ENCODE measurements at regions of chr1 and their contacts with region 1.

Region 1: DNA sequence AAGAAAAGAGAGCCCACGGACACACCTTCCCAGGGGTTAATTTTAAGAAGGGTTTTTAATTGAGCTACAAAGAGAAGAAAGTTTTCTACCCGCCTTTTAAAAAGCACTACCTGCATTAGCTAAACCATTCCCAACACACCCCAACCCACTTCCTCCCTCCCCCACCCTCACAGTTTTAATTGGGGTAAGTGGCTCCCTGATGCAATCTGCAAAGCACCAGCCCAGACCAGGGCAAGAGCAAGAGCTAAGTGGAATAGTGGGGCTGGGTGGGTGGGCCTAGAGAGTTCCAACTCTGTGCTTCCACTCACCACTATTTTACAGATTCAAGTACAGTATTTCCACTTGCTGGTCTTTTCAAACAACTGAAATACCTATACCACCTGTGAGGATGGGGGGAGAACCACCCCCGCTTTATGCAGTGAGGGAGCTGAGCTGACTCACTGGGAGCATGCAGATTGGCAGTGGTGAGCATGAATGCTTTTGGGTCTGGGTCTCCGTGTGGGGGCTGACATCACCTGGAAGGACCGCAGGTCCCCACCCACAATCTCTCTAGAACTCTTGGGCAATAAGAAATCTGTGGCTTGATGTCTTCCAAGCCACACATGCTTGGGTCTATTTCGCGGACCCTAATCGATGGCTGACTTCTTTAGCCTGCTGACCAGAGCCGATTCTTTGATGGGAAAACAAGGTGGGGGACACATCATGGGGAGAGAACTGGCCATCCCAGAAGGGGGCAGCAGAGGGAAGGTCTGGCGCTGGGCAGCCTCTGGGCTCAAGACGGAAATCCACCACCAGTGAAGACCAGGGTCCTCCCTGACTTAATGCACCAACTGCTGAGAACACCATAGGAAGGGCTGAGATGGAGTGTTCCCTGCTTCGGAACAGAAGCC is 95.5 kb downstream of the SSBP3 start:
- DNase-seq: peak in 3 of 5 donors; percentile 45 to 64 (median 56)
- ATAC-seq: peak; percentile 10 to 50 (median 36)
- H3K4me3 ChIP-seq: no peak overlapping the region
- H3K27ac ChIP-seq: peak overlapping the region in 5 of 12 donors; percentile 20 to 67 (median 42)
- H3K4me1 ChIP-seq: peaks cover 0 to 87% (median 52%) of the 10 kb centered on the region in 12 donors
- H3K27me3 ChIP-seq: no peaks in the 10 kb centered on the region
- CTCF ChIP-seq: peak; percentile 41 to 72 (median 61)
- POLR2A ChIP-seq: no peak

Region 2: GRCh38 chr1:54121482-54122134 is 189.1 kb before region 1 on chr1:
- intact Hi-C with region 1: loop called in 1 of 10 experiments (anchors 10 kb)
- DNase-seq: peak; percentile 77 to 89 (median 82)
- ATAC-seq: peak; percentile 80 to 94 (median 88)
- H3K4me3 ChIP-seq: peak overlapping the region in 10 of 12 donors; percentile 17 to 44 (median 24)
- H3K27ac ChIP-seq: no peak overlapping the region
- H3K4me1 ChIP-seq: peaks cover 0 to 13% (median 8%) of the 10 kb centered on the region in 12 donors
- H3K27me3 ChIP-seq: peaks cover 0 to 4% (median 0%) of the 10 kb centered on the region in 9 donors
- CTCF ChIP-seq: peak; percentile 62 to 87 (median 77)
- POLR2A ChIP-seq: no peak

Region 3: GRCh38 chr1:54273092-54273794 is 37.4 kb before region 1 on chr1:
- intact Hi-C with region 1: loop called in 1 of 10 experiments (anchors 5 kb)
- DNase-seq: peak in 4 of 5 donors; percentile 56 to 91 (median 68)
- ATAC-seq: peak; percentile 64 to 84 (median 76)
- H3K4me3 ChIP-seq: peak overlapping the region in 2 of 12 donors; percentile 7 to 14
- H3K27ac ChIP-seq: peak overlapping the region; percentile 25 to 94 (median 81)
- H3K4me1 ChIP-seq: peaks cover 11 to 86% (median 66%) of the 10 kb centered on the region in 12 donors
- H3K27me3 ChIP-seq: no peaks in the 10 kb centered on the region
- CTCF ChIP-seq: peak in 7 of 12 donors; percentile 15 to 53 (median 44)
- POLR2A ChIP-seq: no peak

Region 4: DNA sequence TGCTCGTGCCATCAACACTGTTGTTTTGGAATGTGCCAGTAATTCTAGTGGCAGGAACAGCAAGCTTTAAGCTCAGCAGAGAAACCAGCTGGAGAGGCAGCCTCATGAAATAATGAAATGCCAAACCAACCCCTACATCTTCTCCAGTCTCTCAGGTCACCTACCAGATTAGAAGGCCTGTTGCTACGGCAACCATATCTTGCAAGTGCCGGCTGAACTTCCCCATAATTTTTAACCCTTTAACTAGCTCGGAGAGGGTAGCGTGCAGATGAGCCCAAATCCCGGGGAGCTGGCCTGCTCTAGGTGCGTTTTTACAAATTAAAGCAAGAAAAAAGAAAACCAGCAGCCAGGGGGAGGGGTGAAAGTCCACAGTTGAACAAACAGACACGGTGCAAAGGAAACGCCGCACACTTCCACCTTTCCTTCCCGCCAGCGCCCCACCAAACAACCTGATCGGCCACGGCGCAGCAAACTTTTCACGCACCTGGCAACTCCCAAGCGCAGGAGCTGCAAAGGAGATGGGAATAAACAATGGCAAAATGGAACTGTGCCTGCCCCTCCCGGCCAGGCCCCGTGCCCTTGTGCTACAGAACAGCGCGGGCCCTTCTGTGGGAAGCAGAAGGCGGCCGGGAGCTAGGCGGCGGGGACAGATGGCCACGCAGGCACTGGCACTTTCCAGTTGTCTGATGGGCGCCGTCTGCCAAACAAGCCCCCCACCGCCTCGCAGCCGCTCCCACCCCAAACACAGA is 45.4 kb after region 1 on chr1:
- intact Hi-C with region 1: loop called in 3 of 10 experiments (anchors 2 to 5 kb)
- DNase-seq: no peak
- ATAC-seq: no peak
- H3K4me3 ChIP-seq: peak overlapping the region in 4 of 12 donors; percentile 11 to 39 (median 15)
- H3K27ac ChIP-seq: peak overlapping the region in 5 of 12 donors; percentile 2 to 30 (median 13)
- H3K4me1 ChIP-seq: peaks cover 4 to 86% (median 57%) of the 10 kb centered on the region in 12 donors
- H3K27me3 ChIP-seq: no peaks in the 10 kb centered on the region
- CTCF ChIP-seq: no peak
- POLR2A ChIP-seq: no peak

Region 5: DNA sequence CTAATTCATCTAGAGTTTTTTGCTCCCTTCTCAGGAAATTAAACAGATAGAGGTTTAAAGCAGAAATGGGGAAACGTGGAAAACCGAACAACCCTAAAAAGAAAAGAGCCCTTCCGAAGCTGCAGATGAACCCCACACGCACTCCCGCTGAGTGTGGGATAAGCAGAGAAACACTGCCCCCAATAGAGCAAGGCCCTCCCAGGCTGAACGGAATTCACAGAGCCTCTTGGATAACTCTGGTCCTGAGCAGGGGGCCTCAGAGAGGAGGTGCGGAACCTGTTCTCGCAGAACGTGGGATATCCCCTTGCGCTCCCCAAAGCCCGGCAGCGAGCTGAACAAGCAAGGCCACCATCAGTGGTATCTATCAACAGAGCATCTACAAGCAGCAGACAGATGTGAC is 50.7 kb after region 1 on chr1:
- intact Hi-C with region 1: loop called in 3 of 10 experiments (anchors 2 to 5 kb)
- DNase-seq: peak in 1 of 5 donors; percentile 29
- ATAC-seq: no peak
- H3K4me3 ChIP-seq: no peak overlapping the region
- H3K27ac ChIP-seq: peak overlapping the region in 2 of 12 donors; percentile 4 to 27
- H3K4me1 ChIP-seq: peaks cover under 1 to 79% (median 50%) of the 10 kb centered on the region in 12 donors
- H3K27me3 ChIP-seq: no peaks in the 10 kb centered on the region
- CTCF ChIP-seq: peak in 8 of 12 donors; percentile 7 to 46 (median 28)
- POLR2A ChIP-seq: no peak

Region 6: GRCh38 chr1:54367613-54368012 is 56.9 kb after region 1 on chr1:
- intact Hi-C with region 1: loop called in 1 of 10 experiments (anchors 2 kb)
- DNase-seq: no peak
- ATAC-seq: no peak
- H3K4me3 ChIP-seq: no peak overlapping the region
- H3K27ac ChIP-seq: no peak overlapping the region
- H3K4me1 ChIP-seq: peaks cover 0 to 80% (median 41%) of the 10 kb centered on the region in 12 donors
- H3K27me3 ChIP-seq: no peaks in the 10 kb centered on the region
- CTCF ChIP-seq: no peak
- POLR2A ChIP-seq: no peak

Region 7: GRCh38 chr1:54499360-54500106 is 188.8 kb after region 1 on chr1:
- intact Hi-C with region 1: loop called in 1 of 10 experiments (anchors 10 kb)
- DNase-seq: peak in 1 of 5 donors; percentile 64
- ATAC-seq: peak in 3 of 4 donors; percentile 46 to 83 (median 66)
- H3K4me3 ChIP-seq: peak overlapping the region; percentile 11 to 56 (median 40)
- H3K27ac ChIP-seq: no peak overlapping the region
- H3K4me1 ChIP-seq: peaks cover 0 to 15% (median 5%) of the 10 kb centered on the region in 12 donors
- H3K27me3 ChIP-seq: peaks cover 0 to 63% (median 11%) of the 10 kb centered on the region in 9 donors
- CTCF ChIP-seq: peak in 11 of 12 donors; percentile 14 to 58 (median 38)
- POLR2A ChIP-seq: no peak